ENCODE measurements at regions of chr11 and their contacts with region 1.

Region 1: DNA sequence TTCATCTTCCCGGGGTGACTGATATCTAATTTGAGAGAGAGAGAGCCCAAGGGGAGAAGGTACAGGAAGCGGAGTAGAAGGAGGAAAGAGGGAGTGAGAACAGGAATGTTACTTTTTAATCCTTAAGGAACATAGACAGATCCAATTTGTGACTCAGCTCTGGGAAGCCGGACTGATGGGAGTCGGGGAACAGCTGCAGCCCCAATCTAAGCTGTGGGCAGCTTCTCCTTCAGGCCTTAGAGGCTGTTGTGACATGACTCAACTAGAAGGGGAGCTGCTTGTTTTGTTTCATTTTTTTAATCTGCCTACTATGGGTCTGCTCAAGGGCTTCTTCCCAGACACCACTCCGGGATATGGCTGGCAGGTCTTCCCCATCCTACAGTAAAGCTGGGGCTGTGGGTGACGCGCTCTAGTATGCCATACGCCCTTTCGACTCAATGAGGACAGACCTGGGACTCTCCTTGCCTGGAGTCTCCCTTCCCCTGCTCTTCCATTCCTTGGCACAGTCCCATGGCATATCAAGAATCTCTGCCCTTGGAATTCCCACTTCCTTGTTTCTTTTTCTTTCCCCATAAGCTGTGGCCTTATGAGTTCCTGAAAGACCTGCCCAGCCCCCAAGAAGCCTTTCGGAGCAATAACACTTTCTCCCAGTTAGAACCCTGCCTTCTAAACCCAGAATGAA is 103.3 kb upstream of the AKIP1 start:
- DNase-seq: peak; percentile 53 to 77 (median 68)
- H3K4me3 ChIP-seq: peak overlapping the region; percentile 76
- H3K27ac ChIP-seq: peak overlapping the region; percentile 70 to 86
- H3K4me1 ChIP-seq: peaks cover 30% of the 10 kb centered on the region
- H3K27me3 ChIP-seq: no peaks in the 10 kb centered on the region
- CTCF ChIP-seq: no peak
- EP300 ChIP-seq: no peak
- POLR2A ChIP-seq: peak; percentile 29

Region 2: GRCh38 chr11:8533332-8533731 is 274.4 kb before region 1 on chr11:
- intact Hi-C with region 1: no loop called
- DNase-seq: no peak
- H3K4me3 ChIP-seq: no peak overlapping the region
- H3K27ac ChIP-seq: no peak overlapping the region
- H3K4me1 ChIP-seq: no peaks in the 10 kb centered on the region
- H3K27me3 ChIP-seq: no peaks in the 10 kb centered on the region
- CTCF ChIP-seq: no peak
- EP300 ChIP-seq: no peak
- POLR2A ChIP-seq: no peak

Region 3: GRCh38 chr11:8709002-8709672 is 98.5 kb before region 1 on chr11:
- intact Hi-C with region 1: loop called in 2 of 4 experiments (anchors 5 to 10 kb)
- DNase-seq: peak; percentile 78 to 94 (median 85)
- H3K4me3 ChIP-seq: no peak overlapping the region
- H3K27ac ChIP-seq: peak overlapping the region; percentile 76 to 77
- H3K4me1 ChIP-seq: peaks cover 10% of the 10 kb centered on the region
- H3K27me3 ChIP-seq: no peaks in the 10 kb centered on the region
- CTCF ChIP-seq: no peak
- EP300 ChIP-seq: peak; percentile 40
- POLR2A ChIP-seq: no peak

Region 4: DNA sequence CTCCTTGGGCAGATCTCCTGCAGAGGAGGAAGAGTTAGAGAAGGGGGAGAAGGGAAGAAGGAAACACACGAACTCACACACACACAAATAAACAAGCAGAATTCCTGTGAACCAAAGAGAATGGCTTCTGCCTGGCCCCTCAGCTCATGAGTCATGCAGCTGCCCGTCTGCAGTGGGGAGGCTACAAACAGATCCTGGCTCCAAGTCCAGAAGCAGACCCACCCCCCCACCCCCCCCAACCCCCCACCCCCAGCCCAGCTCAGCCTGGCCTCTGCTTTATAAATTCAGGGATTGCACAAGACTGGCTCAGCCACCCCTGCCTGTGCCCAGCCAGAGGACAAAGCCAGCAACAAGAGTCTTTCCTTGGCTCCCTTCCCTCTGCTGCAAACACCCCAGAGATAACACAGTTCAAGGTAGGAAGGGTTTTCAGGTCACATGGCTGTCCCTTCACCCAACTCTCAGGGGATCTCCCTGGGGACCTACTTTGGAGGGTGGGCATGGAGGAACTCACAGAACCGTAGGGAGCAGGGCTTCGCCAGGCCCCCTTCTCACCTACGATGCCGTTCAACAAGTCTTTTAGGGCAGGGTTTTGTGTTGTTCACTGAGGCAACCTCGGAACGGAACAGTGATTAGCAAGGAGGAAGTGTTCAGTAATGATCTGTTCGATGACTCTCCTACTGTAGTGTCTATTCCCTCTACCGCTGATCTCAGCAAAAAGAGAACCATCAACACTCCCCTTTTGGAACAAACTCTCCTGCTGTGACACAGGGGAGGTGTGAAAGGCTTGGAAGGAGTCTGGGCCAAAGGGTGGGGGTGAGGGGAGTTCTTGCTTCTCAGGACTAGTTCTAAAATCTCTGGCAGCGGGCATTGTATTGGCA is 89.6 kb before region 1 on chr11:
- intact Hi-C with region 1: loop called in 3 of 4 experiments (anchors 5 to 10 kb)
- DNase-seq: peak; percentile 65 to 73 (median 71)
- H3K4me3 ChIP-seq: no peak overlapping the region
- H3K27ac ChIP-seq: peak overlapping the region in 1 of 2 donors; percentile 88
- H3K4me1 ChIP-seq: peaks cover 60% of the 10 kb centered on the region
- H3K27me3 ChIP-seq: no peaks in the 10 kb centered on the region
- CTCF ChIP-seq: no peak
- EP300 ChIP-seq: no peak
- POLR2A ChIP-seq: no peak